ENCODE measurements at regions of chr15 and their contacts with region 1.

Region 1: DNA sequence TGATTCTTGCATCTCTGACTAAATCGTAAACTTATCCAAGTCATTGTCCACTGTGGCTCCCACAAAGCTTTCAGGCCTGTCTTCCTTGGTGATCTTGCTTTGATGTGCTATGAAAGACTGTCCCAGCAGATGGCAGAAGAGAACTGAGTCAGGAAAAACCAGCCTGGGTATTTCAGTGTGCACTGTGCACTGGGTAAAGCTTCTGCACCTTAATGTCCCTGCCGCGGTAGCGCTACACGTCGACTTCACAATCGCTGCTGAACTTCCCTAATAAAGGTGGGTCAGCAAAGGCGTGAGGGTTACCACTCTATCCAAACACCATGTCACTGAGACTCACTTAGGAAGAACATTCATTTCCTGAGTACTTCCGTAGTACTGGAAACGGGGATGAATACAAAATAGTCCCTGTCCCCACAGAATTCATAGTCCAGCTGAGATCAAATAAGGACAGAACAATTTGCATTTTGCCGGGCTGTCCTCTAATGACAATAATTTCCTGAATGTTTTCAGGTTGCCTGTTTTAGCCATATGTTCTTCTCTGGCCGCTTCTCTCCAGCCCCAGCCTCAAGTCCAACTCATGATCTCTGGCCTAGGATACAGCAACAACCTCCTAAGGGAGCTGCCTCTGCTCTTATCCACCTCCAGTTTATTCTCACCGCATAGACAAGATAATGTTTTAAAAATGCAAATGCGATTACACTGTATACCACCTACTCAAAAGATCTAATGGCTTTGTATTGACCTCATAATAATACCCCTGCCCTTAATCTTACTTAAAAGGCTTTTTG is 83.6 kb upstream of the AKAP13 start:
- DNase-seq: peak; percentile 44 to 86 (median 58)
- ATAC-seq: peak; percentile 99
- H3K4me3 ChIP-seq: no peak overlapping the region
- H3K4me3 Mint-ChIP-seq: peak overlapping the region; percentile 14
- H3K27ac ChIP-seq: no peak overlapping the region
- H3K27ac Mint-ChIP-seq: no peak overlapping the region
- H3K4me1 ChIP-seq: peaks cover 6% of the 10 kb centered on the region
- H3K4me1 Mint-ChIP-seq: peaks cover 13% of the 10 kb centered on the region
- H3K27me3 ChIP-seq: no peaks in the 10 kb centered on the region
- H3K27me3 Mint-ChIP-seq: no peaks in the 10 kb centered on the region
- CTCF ChIP-seq: peak; percentile 74

Region 2: DNA sequence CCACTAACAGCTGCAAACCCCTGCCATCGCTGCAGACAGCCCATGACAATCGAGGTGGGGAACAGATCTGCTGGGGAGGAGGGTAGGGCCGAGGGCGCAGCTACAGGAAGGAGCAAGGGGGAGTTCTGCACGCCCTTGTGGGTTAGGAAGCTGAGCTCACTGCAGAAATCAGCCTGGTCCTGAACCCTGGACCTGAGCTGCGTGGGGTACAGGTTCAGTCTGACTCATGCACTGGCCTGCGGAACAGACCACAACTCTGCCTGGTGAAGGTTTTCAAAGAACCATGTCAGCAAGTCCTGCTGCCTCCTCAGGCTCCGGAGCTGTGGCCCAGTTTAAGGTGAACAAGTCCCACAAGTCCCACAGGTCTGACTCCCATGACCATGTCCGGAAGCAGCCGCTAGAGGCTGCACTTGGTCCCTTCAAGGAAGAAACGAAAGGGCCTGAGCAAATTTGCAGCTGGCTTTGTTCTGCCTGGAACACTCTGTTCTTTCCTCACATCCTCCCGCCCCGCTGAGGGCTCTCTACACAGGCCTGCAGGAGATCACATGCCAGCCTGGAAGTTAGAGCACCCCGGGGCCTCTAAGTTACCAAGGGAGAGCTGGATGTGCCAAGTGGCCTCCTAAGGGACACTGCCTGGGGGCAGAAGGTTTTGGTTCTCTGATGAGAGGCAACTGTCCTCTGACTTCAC is 34.2 kb after region 1 on chr15:
- CTCF ChIA-PET with region 1: interaction called, 8 read pairs
- POLR2A ChIA-PET with region 1: interaction called, 6 read pairs
- intact Hi-C with region 1: loop called in 1 of 2 experiments (anchors 2 kb)
- DNase-seq: peak; percentile 46 to 88 (median 60)
- ATAC-seq: peak; percentile 71
- H3K4me3 ChIP-seq: peak overlapping the region; percentile 47
- H3K4me3 Mint-ChIP-seq: peak overlapping the region; percentile 96
- H3K27ac ChIP-seq: peak overlapping the region; percentile 43 to 60
- H3K27ac Mint-ChIP-seq: peak overlapping the region; percentile 85
- H3K4me1 ChIP-seq: peaks cover 30% of the 10 kb centered on the region
- H3K4me1 Mint-ChIP-seq: peaks cover 58% of the 10 kb centered on the region
- H3K27me3 ChIP-seq: no peaks in the 10 kb centered on the region
- H3K27me3 Mint-ChIP-seq: no peaks in the 10 kb centered on the region
- CTCF ChIP-seq: peak; percentile 57

Region 3: GRCh38 chr15:85402195-85402881 is 105.5 kb after region 1 on chr15:
- CTCF ChIA-PET with region 1: interaction called, 10 read pairs
- POLR2A ChIA-PET with region 1: no interaction called
- intact Hi-C with region 1: no loop called
- DNase-seq: peak in 1 of 14 experiments; percentile 25
- ATAC-seq: no peak
- H3K4me3 ChIP-seq: no peak overlapping the region
- H3K4me3 Mint-ChIP-seq: no peak overlapping the region
- H3K27ac ChIP-seq: no peak overlapping the region
- H3K27ac Mint-ChIP-seq: peak overlapping the region; percentile 31
- H3K4me1 ChIP-seq: peaks cover 30% of the 10 kb centered on the region
- H3K4me1 Mint-ChIP-seq: peaks cover 90% of the 10 kb centered on the region
- H3K27me3 ChIP-seq: no peaks in the 10 kb centered on the region
- H3K27me3 Mint-ChIP-seq: no peaks in the 10 kb centered on the region
- CTCF ChIP-seq: no peak

Region 4: GRCh38 chr15:85485956-85486567 is 189.3 kb after region 1 on chr15:
- CTCF ChIA-PET with region 1: interaction called, 5 read pairs
- POLR2A ChIA-PET with region 1: no interaction called
- intact Hi-C with region 1: loop called in 1 of 2 experiments (anchors 1 kb)
- DNase-seq: peak in 12 of 14 experiments; percentile 3 to 86 (median 46)
- ATAC-seq: peak; percentile 91
- H3K4me3 ChIP-seq: no peak overlapping the region
- H3K4me3 Mint-ChIP-seq: no peak overlapping the region
- H3K27ac ChIP-seq: no peak overlapping the region
- H3K27ac Mint-ChIP-seq: no peak overlapping the region
- H3K4me1 ChIP-seq: peaks cover 9% of the 10 kb centered on the region
- H3K4me1 Mint-ChIP-seq: peaks cover 69% of the 10 kb centered on the region
- H3K27me3 ChIP-seq: no peaks in the 10 kb centered on the region
- H3K27me3 Mint-ChIP-seq: no peaks in the 10 kb centered on the region
- CTCF ChIP-seq: peak; percentile 98

Region 5: GRCh38 chr15:85689729-85690128 is 392.9 kb after region 1 on chr15:
- CTCF ChIA-PET with region 1: interaction called, 3 read pairs
- POLR2A ChIA-PET with region 1: no interaction called
- intact Hi-C with region 1: loop called in 1 of 2 experiments (anchors 10 kb)
- DNase-seq: peak; percentile 46 to 88 (median 60)
- ATAC-seq: peak; percentile 86
- H3K4me3 ChIP-seq: peak overlapping the region; percentile 66
- H3K4me3 Mint-ChIP-seq: peak overlapping the region; percentile 97
- H3K27ac ChIP-seq: peak overlapping the region; percentile 77 to 84
- H3K27ac Mint-ChIP-seq: peak overlapping the region; percentile 93
- H3K4me1 ChIP-seq: peaks cover 51% of the 10 kb centered on the region
- H3K4me1 Mint-ChIP-seq: peaks cover 76% of the 10 kb centered on the region
- H3K27me3 ChIP-seq: no peaks in the 10 kb centered on the region
- H3K27me3 Mint-ChIP-seq: no peaks in the 10 kb centered on the region
- CTCF ChIP-seq: peak; percentile 6